Mammary epithelial cell (primary cell): ENCODE measurements at regions of chr10 and their contacts with region 1.

Region 1: DNA sequence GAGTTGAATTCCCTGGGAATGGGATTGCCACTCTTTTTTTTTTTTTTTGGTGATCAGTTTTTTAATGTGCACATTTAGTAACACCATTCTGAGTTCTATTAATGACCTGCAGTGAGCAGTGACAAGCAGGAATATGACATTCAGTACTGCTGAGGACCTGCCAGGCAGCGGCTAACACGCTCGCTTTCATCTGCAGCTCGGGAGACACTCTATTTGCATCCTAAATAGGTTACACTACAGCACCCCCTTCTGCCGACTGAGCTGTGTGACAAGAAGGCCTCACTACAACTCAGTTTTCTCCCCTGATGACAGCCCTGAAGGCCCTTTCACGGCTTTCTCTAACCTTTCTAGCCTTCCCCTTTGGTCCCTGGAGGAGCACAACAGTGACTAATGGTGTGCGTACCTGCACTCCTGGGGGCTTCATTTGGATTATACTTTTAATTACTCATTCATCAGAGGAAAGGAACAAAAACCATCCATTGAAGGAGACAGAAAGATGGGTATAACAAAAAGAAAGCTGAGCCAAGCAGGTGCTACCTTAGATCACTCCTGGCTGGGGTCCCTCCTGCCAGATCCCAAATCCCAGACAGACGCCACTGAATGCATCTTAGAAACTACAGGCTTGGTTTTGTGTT is 872.4 kb downstream of the LRMDA start:
- DNase-seq: peak; percentile 51
- H3K4me3 ChIP-seq: no peak overlapping the region
- H3K27ac ChIP-seq: no peak overlapping the region
- H3K4me1 ChIP-seq: no peaks in the 10 kb centered on the region
- H3K27me3 ChIP-seq: no peaks in the 10 kb centered on the region
- CTCF ChIP-seq: peak; percentile 69 to 78

Region 2: DNA sequence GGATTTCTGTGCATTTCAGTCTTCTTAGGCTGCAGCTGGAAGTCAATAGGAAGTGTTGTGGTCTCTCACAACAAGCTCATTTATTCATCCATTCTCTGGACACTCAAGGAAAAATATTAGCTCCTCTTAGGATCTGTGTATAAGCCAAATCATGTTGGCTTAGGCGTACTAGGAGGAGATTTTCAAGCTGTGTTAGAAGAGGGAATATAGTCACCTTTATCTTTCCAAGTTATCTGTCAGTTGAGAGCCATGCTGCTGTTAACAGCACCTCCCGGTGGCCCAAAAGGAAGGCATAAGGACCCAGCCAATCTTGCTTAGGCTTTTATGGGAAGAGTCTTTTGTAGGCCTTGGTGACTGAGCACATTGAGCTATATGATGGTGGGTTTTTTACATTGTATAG is 652.4 kb before region 1 on chr10:
- CTCF ChIA-PET with region 1: no interaction called
- dilution Hi-C with region 1: no loop called
- in situ Hi-C with region 1: no loop called
- intact Hi-C with region 1: loop called (anchors 10 kb)
- DNase-seq: peak; percentile 35
- H3K4me3 ChIP-seq: no peak overlapping the region
- H3K27ac ChIP-seq: no peak overlapping the region
- H3K4me1 ChIP-seq: no peaks in the 10 kb centered on the region
- H3K27me3 ChIP-seq: no peaks in the 10 kb centered on the region
- CTCF ChIP-seq: peak; percentile 47 to 74

Region 3: GRCh38 chr10:75910032-75910431 is 393.8 kb before region 1 on chr10:
- CTCF ChIA-PET with region 1: interaction called, 4 read pairs
- dilution Hi-C with region 1: no loop called
- in situ Hi-C with region 1: no loop called
- intact Hi-C with region 1: loop called (anchors 2 kb)
- DNase-seq: no peak
- H3K4me3 ChIP-seq: no peak overlapping the region
- H3K27ac ChIP-seq: no peak overlapping the region
- H3K4me1 ChIP-seq: peaks cover 4% of the 10 kb centered on the region
- H3K27me3 ChIP-seq: peaks cover 2% of the 10 kb centered on the region
- CTCF ChIP-seq: peak; percentile 22 to 47

Region 4: DNA sequence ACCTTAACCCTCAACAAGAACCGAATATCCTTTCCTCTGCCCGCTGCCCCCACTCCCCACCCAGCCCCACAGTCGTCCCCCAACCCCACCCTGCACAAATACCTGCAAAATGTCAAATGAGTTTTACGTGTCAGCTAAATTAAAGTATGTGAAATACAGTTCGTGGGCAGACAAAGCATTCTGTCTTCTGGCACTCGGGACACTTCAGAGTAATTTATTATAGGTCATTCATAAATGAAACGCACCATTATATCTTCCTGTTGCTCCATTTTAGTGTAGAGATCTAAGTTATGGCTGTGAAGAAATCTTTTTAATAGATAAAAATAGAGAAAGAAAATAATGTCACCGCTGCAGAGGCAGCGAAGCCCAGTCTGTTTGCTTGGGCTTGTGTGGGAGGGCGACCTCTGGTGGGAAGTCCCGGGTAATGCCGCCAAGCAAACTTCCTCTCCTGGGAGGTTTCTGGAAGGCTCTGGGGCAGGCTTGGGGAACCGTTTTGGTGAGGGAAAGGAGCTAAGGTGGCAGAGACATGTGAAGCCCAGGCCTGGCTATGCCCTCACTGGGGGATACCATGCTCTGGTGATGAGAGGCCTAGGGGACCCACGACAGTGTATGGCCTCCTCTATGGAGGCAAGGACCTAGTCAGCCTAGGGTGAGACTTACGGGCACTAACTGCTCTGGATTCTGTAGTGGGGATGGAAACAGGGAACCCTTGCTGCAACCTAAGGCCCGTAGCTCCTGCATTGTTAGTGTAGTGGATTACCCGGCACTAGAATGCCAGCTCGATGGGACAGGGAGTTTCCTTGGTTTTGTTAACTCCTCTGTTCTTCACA is 267.5 kb before region 1 on chr10:
- CTCF ChIA-PET with region 1: interaction called, 3 read pairs
- dilution Hi-C with region 1: no loop called
- in situ Hi-C with region 1: no loop called
- intact Hi-C with region 1: loop called (anchors 2 kb)
- DNase-seq: peak; percentile 45
- H3K4me3 ChIP-seq: no peak overlapping the region
- H3K27ac ChIP-seq: no peak overlapping the region
- H3K4me1 ChIP-seq: peaks cover 4% of the 10 kb centered on the region
- H3K27me3 ChIP-seq: no peaks in the 10 kb centered on the region
- CTCF ChIP-seq: peak; percentile 86 to 91

Region 5: DNA sequence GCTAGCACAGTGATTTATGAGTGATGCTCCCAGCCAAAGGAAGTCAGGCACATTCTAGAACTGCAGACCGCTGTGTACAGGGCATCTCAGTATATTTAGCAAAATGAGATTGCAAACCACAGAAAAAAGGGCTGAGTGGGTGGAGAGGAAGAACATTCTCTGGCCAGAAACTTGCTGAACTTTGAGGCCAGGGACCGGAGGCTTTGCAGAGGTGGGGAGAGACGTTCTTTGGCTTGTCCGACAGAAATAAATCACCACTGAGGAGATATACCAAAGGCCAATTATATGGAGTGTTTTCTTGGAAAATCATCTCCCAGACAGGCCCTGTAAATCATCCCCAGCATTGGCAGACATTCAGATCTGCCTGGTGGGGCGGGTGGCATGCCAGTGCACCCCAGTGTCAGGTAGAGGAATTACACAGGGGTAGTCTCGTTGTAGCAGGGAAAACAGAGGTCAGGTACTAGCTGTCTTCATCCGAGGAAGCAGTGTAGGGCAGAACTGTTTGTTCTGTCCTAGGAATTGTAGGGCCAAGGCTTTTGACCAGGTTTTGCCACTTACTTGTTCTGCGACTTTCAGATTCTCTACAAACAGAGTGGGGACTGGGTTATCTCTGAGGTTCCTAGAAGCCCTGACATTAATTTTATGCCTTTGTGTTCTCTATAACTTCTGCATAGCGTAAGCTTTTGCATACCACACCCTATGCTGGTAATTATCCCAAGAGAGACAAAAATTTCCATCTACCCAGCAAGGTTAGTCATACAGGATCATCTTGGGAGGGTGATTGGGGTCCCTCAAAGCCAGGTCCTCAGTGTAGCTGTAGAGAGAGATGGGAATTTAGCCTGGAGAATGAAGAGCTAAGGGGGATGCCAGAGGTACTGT is 216.8 kb before region 1 on chr10:
- CTCF ChIA-PET with region 1: no interaction called
- dilution Hi-C with region 1: no loop called
- in situ Hi-C with region 1: loop called in 1 of 2 experiments (anchors 10 kb)
- intact Hi-C with region 1: loop called (anchors 5 kb)
- DNase-seq: peak; percentile 56
- H3K4me3 ChIP-seq: no peak overlapping the region
- H3K27ac ChIP-seq: no peak overlapping the region
- H3K4me1 ChIP-seq: peaks cover 12% of the 10 kb centered on the region
- H3K27me3 ChIP-seq: no peaks in the 10 kb centered on the region
- CTCF ChIP-seq: peak; percentile 77 to 84

Region 6: GRCh38 chr10:76106611-76107010 is 197.2 kb before region 1 on chr10:
- CTCF ChIA-PET with region 1: no interaction called
- dilution Hi-C with region 1: no loop called
- in situ Hi-C with region 1: no loop called
- intact Hi-C with region 1: loop called (anchors 1 kb)
- DNase-seq: no peak
- H3K4me3 ChIP-seq: no peak overlapping the region
- H3K27ac ChIP-seq: no peak overlapping the region
- H3K4me1 ChIP-seq: peaks cover 10% of the 10 kb centered on the region
- H3K27me3 ChIP-seq: no peaks in the 10 kb centered on the region
- CTCF ChIP-seq: no peak

Region 7: GRCh38 chr10:76649723-76650127 is 345.9 kb after region 1 on chr10:
- CTCF ChIA-PET with region 1: no interaction called
- dilution Hi-C with region 1: no loop called
- in situ Hi-C with region 1: no loop called
- intact Hi-C with region 1: no loop called
- DNase-seq: peak; percentile 13
- H3K4me3 ChIP-seq: no peak overlapping the region
- H3K27ac ChIP-seq: no peak overlapping the region
- H3K4me1 ChIP-seq: no peaks in the 10 kb centered on the region
- H3K27me3 ChIP-seq: no peaks in the 10 kb centered on the region
- CTCF ChIP-seq: no peak

Region 8: GRCh38 chr10:76984559-76985443 is 681.0 kb after region 1 on chr10:
- CTCF ChIA-PET with region 1: no interaction called
- dilution Hi-C with region 1: no loop called
- in situ Hi-C with region 1: loop called in 1 of 2 experiments (anchors 25 kb)
- intact Hi-C with region 1: no loop called
- DNase-seq: peak; percentile 45
- H3K4me3 ChIP-seq: no peak overlapping the region
- H3K27ac ChIP-seq: no peak overlapping the region
- H3K4me1 ChIP-seq: no peaks in the 10 kb centered on the region
- H3K27me3 ChIP-seq: no peaks in the 10 kb centered on the region
- CTCF ChIP-seq: peak; percentile 90 to 91